ENCODE measurements at regions of chr2 and their contacts with region 1.

Region 1: GRCh38 chr2:11553661-11554398 is 20.0 kb downstream of the GREB1 start:
- DNase-seq: no peak
- ATAC-seq: no peak

Region 2: DNA sequence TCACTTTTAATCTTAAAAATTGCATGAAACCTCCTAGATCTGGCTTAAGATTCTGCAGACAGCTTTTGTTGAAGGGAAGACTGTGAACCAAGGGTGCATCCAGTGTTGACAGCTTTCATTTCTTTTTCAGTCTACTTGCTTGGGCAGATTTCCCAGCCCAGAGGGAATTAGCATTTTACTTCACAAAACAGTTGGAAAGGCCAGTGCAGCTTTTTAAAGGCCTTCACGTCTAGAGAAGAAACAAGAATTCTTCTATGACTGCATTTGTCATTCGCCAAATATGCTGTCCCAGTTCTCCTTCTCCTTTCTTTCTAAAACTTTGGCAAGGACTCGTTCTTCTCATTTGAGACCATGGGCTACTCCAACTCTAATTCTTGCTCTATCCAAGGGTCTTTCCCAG is 98.7 kb after region 1 on chr2:
- intact Hi-C with region 1: loop called (anchors 5 kb)
- DNase-seq: peak; percentile 23
- ATAC-seq: peak; percentile 60